ENCODE measurements at regions of chr1 and their contacts with region 1.

Region 1: DNA sequence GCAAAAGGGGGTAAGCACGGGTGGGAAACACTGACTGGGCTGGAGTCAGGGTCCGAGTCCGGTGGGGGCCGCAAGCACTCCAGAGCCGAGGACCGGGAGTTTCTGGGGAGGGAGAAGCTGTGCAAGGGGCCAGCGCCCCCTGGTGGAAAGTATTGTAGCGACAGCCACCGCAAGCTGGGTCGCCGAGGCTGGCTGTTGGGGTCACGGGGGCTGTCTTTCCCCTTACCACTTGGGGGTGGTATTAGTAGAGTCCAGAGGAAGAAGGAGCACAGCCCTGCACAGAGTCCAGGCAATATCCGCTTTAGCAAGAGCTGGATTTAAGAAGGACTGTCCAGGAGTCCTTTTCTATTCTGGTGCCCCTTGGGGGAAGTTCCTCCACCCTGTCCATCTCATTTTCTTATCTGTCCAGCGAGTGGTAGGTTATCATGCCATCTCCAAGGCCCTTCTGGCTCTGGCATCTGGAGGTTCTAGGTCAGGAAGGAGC is 17.9 kb upstream of the ETV3 start:
- DNase-seq: peak; percentile 15 to 87 (median 70)
- ATAC-seq: peak; percentile 69 to 79 (median 72)
- H3K4me3 ChIP-seq: no peak overlapping the region
- H3K4me3 Mint-ChIP-seq: peak overlapping the region in 1 of 3 donors; percentile 51
- H3K27ac ChIP-seq: no peak overlapping the region
- H3K27ac Mint-ChIP-seq: peak overlapping the region in 1 of 2 donors; percentile 26
- H3K4me1 ChIP-seq: peaks cover 4 to 28% of the 10 kb centered on the region in 2 experiments
- H3K4me1 Mint-ChIP-seq: peaks cover 18 to 38% (median 28%) of the 10 kb centered on the region in 3 donors
- H3K27me3 ChIP-seq: peaks cover 0 to 29% of the 10 kb centered on the region in 2 experiments
- H3K27me3 Mint-ChIP-seq: peaks cover 14 to 28% of the 10 kb centered on the region in 2 donors

Region 2: DNA sequence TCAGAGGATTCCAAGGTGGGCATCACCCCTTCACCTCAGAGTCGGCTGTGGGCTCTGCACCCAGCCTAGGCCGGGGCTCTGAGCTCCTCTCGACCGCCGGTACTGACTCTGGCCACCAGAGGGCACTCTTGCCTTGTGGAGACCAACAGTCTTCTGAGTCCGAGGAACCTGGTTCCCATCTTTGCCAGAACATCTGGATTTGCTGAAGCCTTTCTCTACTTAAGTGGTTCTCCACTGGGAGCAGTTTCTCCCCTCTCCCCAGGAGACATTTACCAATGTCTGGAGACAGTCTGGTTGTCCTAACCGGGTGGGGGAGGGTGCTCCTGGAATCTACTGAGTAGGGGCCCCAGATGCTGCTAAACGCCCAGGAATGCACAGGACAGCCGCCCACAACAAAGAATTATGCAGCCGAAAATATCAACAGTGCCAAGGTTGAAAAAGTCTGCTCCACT is 65.9 kb before region 1 on chr1:
- CTCF ChIA-PET with region 1: interaction called, 126 to 186 read pairs
- POLR2A ChIA-PET with region 1: no interaction called
- DNase-seq: peak; percentile 51 to 91 (median 81)
- ATAC-seq: peak; percentile 63 to 89 (median 82)
- H3K4me3 ChIP-seq: no peak overlapping the region
- H3K4me3 Mint-ChIP-seq: no peak overlapping the region
- H3K27ac ChIP-seq: no peak overlapping the region
- H3K27ac Mint-ChIP-seq: no peak overlapping the region
- H3K4me1 ChIP-seq: peaks cover 0 to 6% of the 10 kb centered on the region in 2 experiments
- H3K4me1 Mint-ChIP-seq: peaks cover 0 to 5% (median 4%) of the 10 kb centered on the region in 3 donors
- H3K27me3 ChIP-seq: peaks cover 0 to 21% of the 10 kb centered on the region in 2 experiments
- H3K27me3 Mint-ChIP-seq: peaks cover 0 to 2% of the 10 kb centered on the region in 2 donors

Region 3: GRCh38 chr1:157105988-157106812 is 49.9 kb before region 1 on chr1:
- CTCF ChIA-PET with region 1: no interaction called
- POLR2A ChIA-PET with region 1: no interaction called
- DNase-seq: peak in 2 of 35 experiments; percentile 5 to 42
- ATAC-seq: no peak
- H3K4me3 ChIP-seq: no peak overlapping the region
- H3K4me3 Mint-ChIP-seq: no peak overlapping the region
- H3K27ac ChIP-seq: no peak overlapping the region
- H3K27ac Mint-ChIP-seq: peak overlapping the region in 1 of 2 donors; percentile 39
- H3K4me1 ChIP-seq: no peaks in the 10 kb centered on the region
- H3K4me1 Mint-ChIP-seq: no peaks in the 10 kb centered on the region
- H3K27me3 ChIP-seq: peaks cover 0 to 39% of the 10 kb centered on the region in 2 experiments
- H3K27me3 Mint-ChIP-seq: peaks cover 36 to 44% of the 10 kb centered on the region in 2 donors

Region 4: DNA sequence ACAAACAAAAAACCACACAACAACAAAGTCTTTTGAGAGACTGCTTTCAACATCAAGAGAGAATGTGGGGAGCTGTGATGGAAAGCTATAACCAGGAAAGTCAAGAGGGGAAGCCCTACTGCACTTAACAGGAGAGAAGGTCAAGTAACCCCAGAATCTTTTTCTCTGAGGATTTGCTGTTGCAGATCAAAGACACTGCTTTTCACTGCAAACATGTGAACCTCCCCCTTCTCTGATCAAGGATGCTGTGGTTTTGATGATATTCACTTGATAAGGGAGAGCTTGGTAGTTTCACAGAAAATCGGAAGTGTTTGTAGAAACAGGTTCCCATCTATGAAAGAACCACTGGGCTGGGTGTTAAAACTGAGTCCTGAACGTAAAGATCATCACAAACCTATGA is 22.7 kb before region 1 on chr1:
- CTCF ChIA-PET with region 1: interaction called, 12 to 13 read pairs
- POLR2A ChIA-PET with region 1: no interaction called
- DNase-seq: peak in 10 of 35 experiments; percentile 9 to 73 (median 26)
- ATAC-seq: peak; percentile 42 to 52 (median 50)
- H3K4me3 ChIP-seq: no peak overlapping the region
- H3K4me3 Mint-ChIP-seq: peak overlapping the region in 2 of 3 donors; percentile 47 to 58
- H3K27ac ChIP-seq: peak overlapping the region; percentile 32
- H3K27ac Mint-ChIP-seq: peak overlapping the region; percentile 73 to 83
- H3K4me1 ChIP-seq: peaks cover 49 to 54% of the 10 kb centered on the region in 2 experiments
- H3K4me1 Mint-ChIP-seq: peaks cover 67 to 73% (median 69%) of the 10 kb centered on the region in 3 donors
- H3K27me3 ChIP-seq: no peaks in the 10 kb centered on the region
- H3K27me3 Mint-ChIP-seq: no peaks in the 10 kb centered on the region

Region 5: GRCh38 chr1:157138220-157139051 is 17.7 kb before region 1 on chr1 and contains the start of gene ETV3:
- CTCF ChIA-PET with region 1: interaction called, 12 to 13 read pairs
- POLR2A ChIA-PET with region 1: no interaction called
- DNase-seq: peak; percentile 70 to 93 (median 83)
- ATAC-seq: peak; percentile 80 to 85 (median 82)
- H3K4me3 ChIP-seq: peak within 1 kb of the TSS; percentile 91 to 92
- H3K4me3 Mint-ChIP-seq: peak within 1 kb of the TSS; percentile 89 to 96 (median 95)
- H3K27ac ChIP-seq: peak within 1 kb of the TSS; percentile 98
- H3K27ac Mint-ChIP-seq: peak within 1 kb of the TSS; percentile 90 to 94
- H3K4me1 ChIP-seq: peaks cover 36 to 44% of the 10 kb centered on the region in 2 experiments
- H3K4me1 Mint-ChIP-seq: peaks cover 56 to 59% (median 56%) of the 10 kb centered on the region in 3 donors
- H3K27me3 ChIP-seq: no peaks in the 10 kb centered on the region
- H3K27me3 Mint-ChIP-seq: no peaks in the 10 kb centered on the region
- total RNA-seq, gene ETV3: 30.6 to 86.3 (median 33.4) TPM

Region 6: GRCh38 chr1:157193702-157194391 is 37.7 kb after region 1 on chr1:
- CTCF ChIA-PET with region 1: no interaction called
- POLR2A ChIA-PET with region 1: no interaction called
- DNase-seq: peak in 27 of 35 experiments; percentile 7 to 50 (median 29)
- ATAC-seq: no peak
- H3K4me3 ChIP-seq: no peak overlapping the region
- H3K4me3 Mint-ChIP-seq: no peak overlapping the region
- H3K27ac ChIP-seq: no peak overlapping the region
- H3K27ac Mint-ChIP-seq: no peak overlapping the region
- H3K4me1 ChIP-seq: no peaks in the 10 kb centered on the region
- H3K4me1 Mint-ChIP-seq: peaks cover 5 to 8% (median 7%) of the 10 kb centered on the region in 3 donors
- H3K27me3 ChIP-seq: peaks cover 0 to 51% of the 10 kb centered on the region in 2 experiments
- H3K27me3 Mint-ChIP-seq: peaks cover 43 to 45% of the 10 kb centered on the region in 2 donors

Measured in T-cell (primary cell).